GM10248 (cell line): ENCODE measurements at regions of chr6 and their contacts with region 1.

Region 1: GRCh38 chr6:26216356-26216885 is 129.2 kb downstream of the HFE start:
- DNase-seq: peak; percentile 85
- CTCF ChIP-seq: no peak

Region 2: DNA sequence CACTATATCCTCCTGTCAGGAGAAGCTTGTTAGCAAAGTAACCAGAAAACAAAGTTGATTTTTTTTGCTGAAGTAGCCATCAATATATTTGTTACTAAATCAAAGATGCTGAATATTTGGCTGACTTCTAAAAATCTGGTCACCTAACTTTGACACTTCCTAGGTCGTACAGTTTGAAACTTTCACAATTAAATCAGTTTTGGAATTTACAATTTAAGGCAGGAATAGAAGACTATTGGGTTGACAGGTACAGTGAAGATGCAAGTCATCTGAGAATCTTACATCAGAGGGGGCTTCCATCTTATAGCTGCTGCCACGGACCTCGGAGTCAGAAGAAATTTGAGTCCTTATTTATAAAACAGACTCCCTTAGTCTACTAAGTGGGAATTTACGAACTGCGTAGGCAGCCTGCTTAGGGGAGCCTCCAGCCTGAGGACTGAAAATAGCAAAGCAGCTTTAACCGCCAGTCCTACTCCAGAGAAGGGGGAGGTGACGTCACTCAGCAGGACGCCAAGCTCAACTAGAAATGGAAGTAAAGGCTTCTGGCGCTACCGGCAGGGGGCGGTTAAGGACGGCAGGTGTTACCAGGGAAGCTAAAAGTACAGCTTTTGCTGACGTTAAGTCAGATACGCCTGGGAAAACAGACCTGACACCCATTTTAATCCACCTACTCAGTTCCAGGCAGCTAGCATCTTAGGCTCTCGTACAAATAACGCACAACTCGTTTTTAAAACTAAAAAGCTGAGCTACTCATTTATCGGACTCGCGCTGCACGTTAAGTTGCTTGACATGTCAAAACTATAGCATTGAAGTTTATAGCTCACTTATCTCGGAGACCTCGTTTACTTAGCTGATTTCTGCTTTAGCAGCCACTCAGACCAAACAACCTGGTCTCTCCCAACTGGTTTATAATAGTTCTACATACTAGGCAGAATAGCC is 190.3 kb before region 1 on chr6:
- CTCF ChIA-PET with region 1: interaction called, 4 read pairs
- POLR2A ChIA-PET with region 1: interaction called, 21 read pairs
- DNase-seq: peak; percentile 62
- CTCF ChIP-seq: peak; percentile 78

Region 3: GRCh38 chr6:26103770-26104456 is 112.5 kb before region 1 on chr6:
- CTCF ChIA-PET with region 1: no interaction called
- POLR2A ChIA-PET with region 1: interaction called, 10 read pairs
- DNase-seq: peak; percentile 78
- CTCF ChIP-seq: peak; percentile 52

Region 4: DNA sequence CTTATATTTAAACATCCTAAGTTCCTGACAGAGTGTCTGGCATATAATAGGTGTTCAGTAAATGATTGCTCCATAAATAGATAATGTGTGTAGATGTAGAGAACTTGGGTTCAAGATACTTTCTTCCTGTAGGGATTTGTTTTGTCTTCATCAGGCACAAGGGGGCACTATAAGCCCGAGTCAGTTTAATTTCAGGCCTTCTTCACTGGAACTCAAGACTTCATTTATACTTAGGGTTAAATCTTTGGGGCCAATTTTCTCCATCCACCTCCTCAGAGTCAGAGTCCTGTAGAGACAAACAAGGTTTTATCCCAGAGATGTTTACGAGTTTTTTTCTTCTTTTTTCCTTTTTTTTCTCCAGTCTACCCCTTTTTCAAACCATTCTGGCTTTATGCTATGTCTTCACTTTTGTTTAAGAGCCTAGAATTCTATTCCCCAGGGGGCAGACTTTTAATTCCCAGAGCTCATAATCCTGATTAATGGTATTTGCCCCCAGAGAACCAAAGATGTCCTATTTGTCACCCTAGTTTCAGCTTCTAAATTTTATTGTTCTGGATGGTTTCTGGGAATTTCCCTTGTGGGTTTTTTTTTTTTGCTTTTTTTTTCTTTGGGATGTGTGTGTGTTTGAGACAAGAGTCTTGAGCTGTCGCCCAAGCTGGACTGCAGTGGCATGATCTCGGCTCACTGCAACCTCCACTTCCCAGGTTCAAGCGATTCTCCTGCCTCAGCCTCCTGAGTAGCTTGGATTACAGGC is 40.8 kb before region 1 on chr6:
- CTCF ChIA-PET with region 1: no interaction called
- POLR2A ChIA-PET with region 1: interaction called, 21 read pairs
- DNase-seq: peak; percentile 59
- CTCF ChIP-seq: peak; percentile 59

Region 5: GRCh38 chr6:26204332-26205165 is 11.9 kb before region 1 on chr6:
- CTCF ChIA-PET with region 1: interaction called, 18 read pairs
- POLR2A ChIA-PET with region 1: interaction called, 306 read pairs
- DNase-seq: peak; percentile 84
- CTCF ChIP-seq: peak; percentile 22

Region 6: GRCh38 chr6:26285143-26286134 is 69.0 kb after region 1 on chr6:
- CTCF ChIA-PET with region 1: no interaction called
- POLR2A ChIA-PET with region 1: interaction called, 29 read pairs
- DNase-seq: peak; percentile 79
- CTCF ChIP-seq: no peak

Region 7: GRCh38 chr6:27864906-27865849 is 1648.8 kb after region 1 on chr6:
- CTCF ChIA-PET with region 1: no interaction called
- POLR2A ChIA-PET with region 1: interaction called, 31 read pairs
- DNase-seq: peak; percentile 89
- CTCF ChIP-seq: no peak